ENCODE measurements at regions of chr1 and their contacts with region 1.

Region 1: DNA sequence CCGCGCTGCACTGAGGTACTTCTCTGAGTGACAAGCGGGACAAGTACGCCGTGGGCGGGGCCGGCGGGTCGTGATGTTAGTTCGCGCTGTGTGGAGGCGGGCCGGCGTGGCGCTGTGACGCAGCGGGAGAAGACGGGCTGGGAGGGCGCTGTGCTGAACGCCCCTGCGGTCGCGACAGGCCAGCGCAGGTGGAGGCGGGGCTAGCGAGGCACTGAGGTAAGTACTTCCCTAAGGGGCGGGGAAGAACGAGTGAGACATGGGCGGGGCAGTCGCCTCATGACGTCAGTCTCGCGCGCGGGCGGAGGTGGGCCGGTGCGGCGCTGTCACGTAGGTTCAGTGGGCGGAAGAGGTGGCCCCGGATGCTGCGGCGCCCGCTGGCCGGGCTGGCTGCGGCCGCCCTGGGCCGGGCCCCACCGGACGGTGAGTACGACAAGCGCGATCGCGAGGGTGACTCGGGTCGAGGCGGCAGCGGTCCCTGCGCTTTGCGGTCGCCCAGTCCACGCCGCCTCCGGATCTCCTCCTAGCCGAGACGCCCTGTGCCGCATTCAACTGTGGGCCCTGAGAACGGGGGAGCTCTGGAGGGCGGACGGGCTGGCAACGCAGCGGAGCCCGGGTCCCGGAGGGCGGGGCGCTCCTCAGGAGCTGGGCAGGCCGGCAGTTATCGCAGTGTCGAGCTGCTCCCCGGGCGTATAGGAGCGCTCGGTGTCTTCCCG is at the start of gene GUK1:
- DNase-seq: peak; percentile 99
- ATAC-seq: peak; percentile 92
- H3K4me3 Mint-ChIP-seq: peak within 1 kb of the TSS; percentile 96
- H3K27ac Mint-ChIP-seq: peak within 1 kb of the TSS; percentile 99
- H3K4me1 Mint-ChIP-seq: peaks cover 71% of the 10 kb centered on the region
- H3K27me3 Mint-ChIP-seq: no peaks in the 10 kb centered on the region
- CTCF ChIP-seq: no peak
- total RNA-seq, gene GUK1: 104 and 119 TPM in 2 replicates

Region 2: DNA sequence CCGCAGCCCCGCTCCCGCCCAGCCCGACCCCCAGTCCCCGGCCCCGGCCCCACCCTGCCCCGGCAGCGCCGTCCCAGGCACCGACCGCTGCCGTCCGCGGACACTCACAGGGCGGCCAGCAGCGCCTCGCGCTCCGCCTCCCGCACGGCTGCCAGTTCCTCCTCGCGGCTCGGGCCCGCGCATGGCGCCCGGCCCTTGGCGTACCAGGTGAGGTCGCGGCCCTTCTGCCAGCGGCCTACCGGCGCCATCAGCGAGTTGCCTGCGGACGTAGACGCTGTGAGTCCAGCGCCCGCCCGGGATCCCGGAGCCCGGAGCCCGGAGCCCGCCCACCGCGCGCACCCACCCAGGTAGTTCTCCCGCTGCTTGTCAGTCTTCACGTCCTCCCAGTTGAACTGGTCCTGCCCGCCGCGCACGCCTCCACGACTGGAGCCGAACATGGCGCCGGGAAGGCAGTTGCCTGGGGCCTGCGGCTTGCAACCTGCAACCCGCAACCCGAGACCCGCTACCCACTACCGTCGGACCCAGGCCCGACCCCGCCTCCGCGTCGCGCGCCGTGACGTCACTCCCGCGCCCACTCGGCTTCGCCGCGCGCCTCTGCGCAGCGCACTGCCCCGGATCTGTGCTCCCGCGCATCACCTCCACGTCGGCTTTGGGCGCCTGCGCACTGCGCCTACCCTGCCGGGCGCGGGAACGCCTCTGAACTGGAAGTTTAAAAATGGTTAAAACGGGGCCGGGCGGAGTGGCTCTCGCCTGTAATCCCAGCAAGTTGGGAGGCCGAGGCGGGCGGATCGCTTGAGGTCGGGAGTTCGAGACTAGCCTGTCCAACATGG is 37.1 kb before region 1 on chr1 and contains the start of gene C1orf35:
- CTCF ChIA-PET with region 1: no interaction called
- POLR2A ChIA-PET with region 1: interaction called, 3 read pairs
- intact Hi-C with region 1: loop called (anchors 1 kb)
- DNase-seq: peak; percentile 90
- ATAC-seq: peak; percentile 87
- H3K4me3 Mint-ChIP-seq: peak within 1 kb of the TSS; percentile 94
- H3K27ac Mint-ChIP-seq: peak within 1 kb of the TSS; percentile 86
- H3K4me1 Mint-ChIP-seq: peaks cover 30% of the 10 kb centered on the region
- H3K27me3 Mint-ChIP-seq: no peaks in the 10 kb centered on the region
- CTCF ChIP-seq: no peak
- total RNA-seq, gene C1orf35: 11.9 and 13.3 TPM in 2 replicates

Region 3: DNA sequence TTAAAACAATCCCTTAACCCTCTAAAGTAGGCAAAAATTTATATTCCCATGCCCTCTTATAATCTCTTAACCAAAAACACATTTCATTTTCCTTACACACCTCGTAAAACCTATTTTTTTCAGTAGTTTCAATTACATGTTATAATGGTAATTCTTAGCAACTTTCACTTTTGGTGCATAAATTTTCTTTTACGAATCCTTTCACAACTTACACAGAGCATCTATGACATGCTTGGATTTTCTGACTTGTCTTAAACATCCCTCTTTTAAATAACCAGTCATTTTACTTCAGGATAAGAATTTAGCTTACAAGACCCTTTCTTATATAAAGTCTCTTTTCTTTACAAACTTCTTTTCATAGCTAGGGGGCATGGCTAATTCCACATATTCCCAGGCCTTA is 22.1 kb before region 1 on chr1:
- CTCF ChIA-PET with region 1: no interaction called
- POLR2A ChIA-PET with region 1: no interaction called
- intact Hi-C with region 1: no loop called
- DNase-seq: no peak
- ATAC-seq: no peak
- H3K4me3 Mint-ChIP-seq: no peak overlapping the region
- H3K27ac Mint-ChIP-seq: no peak overlapping the region
- H3K4me1 Mint-ChIP-seq: peaks cover 9% of the 10 kb centered on the region
- H3K27me3 Mint-ChIP-seq: no peaks in the 10 kb centered on the region
- CTCF ChIP-seq: no peak

Region 4: GRCh38 chr1:228174482-228175375 is 34.6 kb after region 1 on chr1:
- CTCF ChIA-PET with region 1: no interaction called
- POLR2A ChIA-PET with region 1: no interaction called
- intact Hi-C with region 1: loop called (anchors 2 kb)
- DNase-seq: no peak
- ATAC-seq: peak; percentile 59
- H3K4me3 Mint-ChIP-seq: no peak overlapping the region
- H3K27ac Mint-ChIP-seq: no peak overlapping the region
- H3K4me1 Mint-ChIP-seq: peaks cover 6% of the 10 kb centered on the region
- H3K27me3 Mint-ChIP-seq: no peaks in the 10 kb centered on the region
- CTCF ChIP-seq: no peak

Region 5: GRCh38 chr1:228275739-228276421 is 135.8 kb after region 1 on chr1:
- CTCF ChIA-PET with region 1: no interaction called
- POLR2A ChIA-PET with region 1: interaction called, 4 read pairs
- intact Hi-C with region 1: loop called (anchors 1 kb)
- DNase-seq: peak; percentile 66
- ATAC-seq: peak; percentile 98
- H3K4me3 Mint-ChIP-seq: peak overlapping the region; percentile 82
- H3K27ac Mint-ChIP-seq: no peak overlapping the region
- H3K4me1 Mint-ChIP-seq: peaks cover 8% of the 10 kb centered on the region
- H3K27me3 Mint-ChIP-seq: no peaks in the 10 kb centered on the region
- CTCF ChIP-seq: no peak

Region 6: DNA sequence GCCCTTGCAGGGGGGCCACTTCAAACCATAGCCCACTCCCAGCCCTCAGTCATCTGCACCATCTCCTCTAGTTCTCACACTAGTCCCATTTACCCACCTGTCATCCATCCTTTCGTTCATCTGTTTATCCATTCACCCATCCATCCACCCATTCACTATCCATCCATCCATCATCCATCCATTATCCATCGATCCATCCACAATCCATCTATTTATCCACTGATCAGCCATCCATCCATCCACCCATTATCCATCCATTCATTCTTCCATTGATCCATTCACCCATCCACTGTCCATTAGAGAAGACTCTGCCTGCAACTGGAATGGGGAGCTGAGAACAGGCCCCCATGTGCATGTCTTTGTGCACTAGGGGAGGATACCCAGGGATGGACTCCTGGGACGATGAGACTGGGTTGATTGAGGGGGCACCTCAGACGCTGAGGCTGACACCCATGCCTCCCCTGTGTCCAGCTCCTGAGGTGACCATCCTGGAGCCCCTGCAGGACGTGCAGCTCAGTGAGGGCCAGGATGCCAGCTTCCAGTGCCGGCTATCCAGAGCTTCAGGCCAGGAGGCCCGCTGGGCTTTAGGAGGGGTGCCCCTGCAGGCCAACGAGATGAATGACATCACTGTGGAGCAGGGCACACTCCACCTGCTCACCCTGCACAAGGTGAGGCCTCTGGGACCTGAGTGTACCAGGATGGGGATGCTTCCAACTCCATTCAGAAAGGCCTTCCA is 168.7 kb after region 1 on chr1:
- CTCF ChIA-PET with region 1: no interaction called
- POLR2A ChIA-PET with region 1: no interaction called
- intact Hi-C with region 1: no loop called
- DNase-seq: no peak
- ATAC-seq: no peak
- H3K4me3 Mint-ChIP-seq: no peak overlapping the region
- H3K27ac Mint-ChIP-seq: no peak overlapping the region
- H3K4me1 Mint-ChIP-seq: no peaks in the 10 kb centered on the region
- H3K27me3 Mint-ChIP-seq: no peaks in the 10 kb centered on the region
- CTCF ChIP-seq: no peak